ENCODE measurements at regions of chr1 and their contacts with region 1.

Region 1: GRCh38 chr1:114558544-114558943 is 22.9 kb downstream of the BCAS2 start:
- DNase-seq: peak in 2 of 4 experiments; percentile 37 to 52
- ATAC-seq: peak; percentile 86
- H3K4me3 ChIP-seq: no peak overlapping the region
- H3K27ac ChIP-seq: no peak overlapping the region
- H3K4me1 ChIP-seq: no peaks in the 10 kb centered on the region
- H3K27me3 ChIP-seq: no peaks in the 10 kb centered on the region
- CTCF ChIP-seq: peak; percentile 54 to 80 (median 57); a peak in 4 of 6 replicates
- EP300 ChIP-seq: no peak
- POLR2A ChIP-seq: no peak
- RAD21 ChIP-seq: peak; percentile 70 to 87

Region 2: DNA sequence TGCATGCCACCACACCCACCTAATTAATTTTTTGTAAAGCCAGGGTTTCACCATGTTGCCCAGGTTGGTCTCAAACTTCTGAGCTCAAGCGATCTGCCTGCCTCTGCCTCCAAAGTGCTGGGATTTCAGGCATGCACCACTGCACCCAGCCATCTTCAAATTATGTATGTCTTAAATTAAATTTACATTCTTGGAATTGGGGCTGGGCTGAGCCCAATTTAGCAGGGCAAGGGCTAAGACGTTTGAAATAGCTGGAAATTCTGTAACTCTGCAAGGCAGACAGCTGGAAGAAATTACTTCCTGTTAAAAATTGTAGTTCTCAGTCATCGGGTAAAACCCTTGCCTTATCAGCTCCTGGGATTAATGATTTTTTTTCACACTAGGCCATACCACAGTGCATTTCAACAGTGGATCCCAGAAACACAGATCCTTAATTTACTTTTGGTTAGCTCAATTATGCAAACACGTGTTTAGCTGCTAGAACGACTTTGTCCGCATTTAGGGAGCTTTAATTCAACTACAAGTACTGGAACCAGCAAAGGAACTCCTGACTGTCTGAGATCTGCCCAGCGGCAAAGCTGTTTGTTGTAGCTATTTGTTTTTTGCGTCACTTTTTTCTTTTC is 496.0 kb before region 1 on chr1:
- CTCF ChIA-PET with region 1: no interaction called
- POLR2A ChIA-PET with region 1: no interaction called
- in situ Hi-C with region 1: no loop called
- intact Hi-C with region 1: no loop called
- DNase-seq: no peak
- ATAC-seq: no peak
- H3K4me3 ChIP-seq: no peak overlapping the region
- H3K27ac ChIP-seq: no peak overlapping the region
- H3K4me1 ChIP-seq: no peaks in the 10 kb centered on the region
- H3K27me3 ChIP-seq: no peaks in the 10 kb centered on the region; a peak in 2 of 5 replicates
- CTCF ChIP-seq: no peak
- EP300 ChIP-seq: no peak
- POLR2A ChIP-seq: no peak
- RAD21 ChIP-seq: no peak

Region 3: GRCh38 chr1:114428083-114428749 is 130.3 kb before region 1 on chr1:
- CTCF ChIA-PET with region 1: interaction called, 6 read pairs
- POLR2A ChIA-PET with region 1: no interaction called
- in situ Hi-C with region 1: no loop called
- intact Hi-C with region 1: loop called (anchors 5 kb)
- DNase-seq: peak in 1 of 4 experiments; percentile 33
- ATAC-seq: peak; percentile 66
- H3K4me3 ChIP-seq: no peak overlapping the region
- H3K27ac ChIP-seq: no peak overlapping the region
- H3K4me1 ChIP-seq: no peaks in the 10 kb centered on the region
- H3K27me3 ChIP-seq: no peaks in the 10 kb centered on the region
- CTCF ChIP-seq: peak in 2 of 3 experiments; percentile 59 to 73; a peak in 3 of 6 replicates
- EP300 ChIP-seq: no peak
- POLR2A ChIP-seq: no peak
- RAD21 ChIP-seq: peak; percentile 62 to 77

Region 4: DNA sequence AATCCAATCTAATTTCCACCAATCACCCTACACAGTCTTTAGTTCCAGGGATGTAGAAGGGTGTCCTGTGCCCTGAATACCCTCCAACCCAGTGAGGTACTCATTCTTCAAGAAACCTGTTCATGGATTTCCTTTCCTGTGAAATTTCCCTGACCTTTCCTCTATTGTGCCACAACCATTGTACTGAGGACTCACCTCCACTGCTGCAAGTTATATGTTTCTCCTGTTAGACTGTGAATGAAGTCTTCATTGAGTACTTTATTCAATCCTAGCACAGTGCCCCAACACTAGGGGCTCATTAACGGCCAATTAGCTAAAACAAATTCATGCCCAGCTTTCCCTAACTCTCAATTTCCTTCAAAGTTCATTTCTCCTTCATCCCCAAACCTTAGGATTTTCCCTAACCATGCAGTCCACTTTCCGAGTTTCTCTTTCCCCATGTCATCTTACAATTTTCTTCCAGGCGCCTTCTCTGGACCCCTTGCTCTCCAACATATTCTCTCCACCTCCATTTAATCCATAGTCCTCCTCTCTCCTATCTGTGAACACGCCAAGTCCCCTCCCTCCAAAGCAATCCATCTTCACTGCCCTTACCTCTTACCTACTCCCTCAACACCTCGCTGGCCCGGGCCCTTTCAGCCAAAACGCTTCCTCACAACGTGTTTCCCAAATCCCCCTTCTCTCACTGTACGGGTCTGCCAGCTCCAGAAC is 48.8 kb before region 1 on chr1:
- CTCF ChIA-PET with region 1: no interaction called
- POLR2A ChIA-PET with region 1: interaction called, 3 read pairs
- in situ Hi-C with region 1: no loop called
- intact Hi-C with region 1: loop called (anchors 2 kb)
- DNase-seq: no peak
- ATAC-seq: peak; percentile 13
- H3K4me3 ChIP-seq: peak overlapping the region; percentile 86
- H3K27ac ChIP-seq: peak overlapping the region; percentile 92
- H3K4me1 ChIP-seq: peaks cover 30 to 41% of the 10 kb centered on the region in 2 experiments
- H3K27me3 ChIP-seq: no peaks in the 10 kb centered on the region
- CTCF ChIP-seq: no peak
- EP300 ChIP-seq: no peak
- POLR2A ChIP-seq: no peak
- RAD21 ChIP-seq: no peak

Region 5: GRCh38 chr1:115356356-115356755 is 797.8 kb after region 1 on chr1:
- CTCF ChIA-PET with region 1: no interaction called
- POLR2A ChIA-PET with region 1: no interaction called
- in situ Hi-C with region 1: no loop called
- intact Hi-C with region 1: no loop called
- DNase-seq: no peak
- ATAC-seq: no peak
- H3K4me3 ChIP-seq: no peak overlapping the region
- H3K27ac ChIP-seq: no peak overlapping the region
- H3K4me1 ChIP-seq: no peaks in the 10 kb centered on the region
- H3K27me3 ChIP-seq: no peaks in the 10 kb centered on the region; a peak in 1 of 5 replicates
- CTCF ChIP-seq: no peak
- EP300 ChIP-seq: no peak
- POLR2A ChIP-seq: no peak
- RAD21 ChIP-seq: no peak

Measured in K562 (cell line).